ENCODE measurements at regions of chr3 and their contacts with region 1.

Region 1: DNA sequence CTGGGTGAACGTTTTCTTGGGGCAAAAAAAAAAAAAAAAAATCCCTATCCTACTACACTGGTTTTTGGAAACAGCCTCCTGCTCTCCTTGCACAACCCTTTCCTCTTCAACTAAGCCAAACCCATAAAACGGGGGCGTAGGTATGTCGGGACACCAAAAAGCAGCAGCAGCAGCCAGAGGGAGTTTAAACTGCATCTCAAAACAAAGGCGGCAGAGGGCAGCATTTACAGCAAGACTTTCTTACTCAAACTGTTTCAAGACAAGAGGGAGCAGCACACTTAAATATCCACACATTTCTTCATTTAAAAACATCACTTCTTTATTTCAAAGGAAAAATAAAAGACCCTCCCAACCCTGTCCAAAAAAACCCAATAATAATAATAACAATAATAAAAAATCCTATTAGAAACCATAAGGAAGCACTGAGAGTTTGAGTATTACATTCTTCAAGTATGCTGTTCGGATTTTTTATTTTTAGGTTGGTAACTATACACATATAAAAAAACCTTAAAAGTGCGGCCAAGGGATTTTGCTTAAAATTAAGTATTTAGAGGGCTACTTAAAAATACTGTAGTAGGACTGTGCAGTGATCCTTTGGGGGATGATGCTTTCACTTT is 43.9 kb upstream of the PLXND1 start:
- DNase-seq: peak; percentile 86
- H3K4me3 ChIP-seq: no peak overlapping the region
- H3K27ac ChIP-seq: no peak overlapping the region
- H3K4me1 ChIP-seq: peaks cover 0 to 33% (median 11%) of the 10 kb centered on the region in 4 donors
- H3K27me3 ChIP-seq: no peaks in the 10 kb centered on the region
- CTCF ChIP-seq: peak; percentile 47 to 75 (median 68)
- EP300 ChIP-seq: no peak
- POLR2A ChIP-seq: no peak

Region 2: GRCh38 chr3:129688271-129688895 is 38.0 kb after region 1 on chr3:
- intact Hi-C with region 1: loop called (anchors 5 kb)
- DNase-seq: peak; percentile 88
- H3K4me3 ChIP-seq: peak overlapping the region; percentile 28 to 44 (median 38)
- H3K27ac ChIP-seq: peak overlapping the region; percentile 53 to 76 (median 73)
- H3K4me1 ChIP-seq: peaks cover 0 to 51% (median 19%) of the 10 kb centered on the region in 4 donors
- H3K27me3 ChIP-seq: no peaks in the 10 kb centered on the region
- CTCF ChIP-seq: no peak
- EP300 ChIP-seq: no peak
- POLR2A ChIP-seq: no peak

Region 3: GRCh38 chr3:129824926-129825541 is 174.7 kb after region 1 on chr3:
- intact Hi-C with region 1: loop called (anchors 1 kb)
- DNase-seq: no peak
- H3K4me3 ChIP-seq: no peak overlapping the region
- H3K27ac ChIP-seq: no peak overlapping the region
- H3K4me1 ChIP-seq: peaks cover 0 to 11% (median 4%) of the 10 kb centered on the region in 4 donors
- H3K27me3 ChIP-seq: no peaks in the 10 kb centered on the region
- CTCF ChIP-seq: peak in 3 of 4 experiments; percentile 62 to 69 (median 63)
- EP300 ChIP-seq: no peak
- POLR2A ChIP-seq: no peak

Region 4: GRCh38 chr3:130014526-130014925 is 364.2 kb after region 1 on chr3:
- intact Hi-C with region 1: no loop called
- DNase-seq: no peak
- H3K4me3 ChIP-seq: no peak overlapping the region
- H3K27ac ChIP-seq: no peak overlapping the region
- H3K4me1 ChIP-seq: no peaks in the 10 kb centered on the region
- H3K27me3 ChIP-seq: no peaks in the 10 kb centered on the region
- CTCF ChIP-seq: no peak
- EP300 ChIP-seq: no peak
- POLR2A ChIP-seq: no peak

Measured in sigmoid colon (tissue), 7 donors.